Mammary epithelial cell (primary cell): ENCODE measurements at regions of chr10 and their contacts with region 1.

Region 1: GRCh38 chr10:113390896-113391295 is 162.0 kb upstream of the HABP2 start:
- DNase-seq: no peak
- H3K4me3 ChIP-seq: no peak overlapping the region
- H3K27ac ChIP-seq: no peak overlapping the region
- H3K4me1 ChIP-seq: no peaks in the 10 kb centered on the region
- H3K27me3 ChIP-seq: peaks cover 5% of the 10 kb centered on the region
- CTCF ChIP-seq: no peak

Region 2: GRCh38 chr10:113431398-113432160 is 40.7 kb after region 1 on chr10:
- CTCF ChIA-PET with region 1: no interaction called
- dilution Hi-C with region 1: loop called (anchors 5 kb)
- in situ Hi-C with region 1: no loop called
- intact Hi-C with region 1: no loop called
- DNase-seq: no peak
- H3K4me3 ChIP-seq: no peak overlapping the region
- H3K27ac ChIP-seq: no peak overlapping the region
- H3K4me1 ChIP-seq: no peaks in the 10 kb centered on the region
- H3K27me3 ChIP-seq: no peaks in the 10 kb centered on the region
- CTCF ChIP-seq: no peak

Region 3: DNA sequence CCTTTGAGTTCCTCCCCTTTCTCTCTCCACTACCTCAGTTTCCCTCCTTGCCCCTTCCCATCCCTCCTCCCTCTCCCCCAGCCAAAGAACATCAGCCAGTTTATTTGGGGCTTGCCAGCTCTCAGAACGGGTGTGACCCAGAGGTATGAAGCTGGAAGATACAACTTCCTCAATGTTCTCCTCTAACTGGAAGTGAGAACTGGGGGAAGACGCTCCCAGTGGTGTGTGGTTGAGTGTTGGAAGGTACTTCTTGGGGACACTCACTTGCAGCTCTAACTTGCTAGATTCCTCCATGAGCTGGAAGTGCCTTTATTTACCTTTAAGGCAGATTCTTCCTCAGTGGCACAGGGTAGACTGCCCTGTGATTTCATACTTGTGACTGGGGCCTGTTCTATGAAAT is 51.4 kb after region 1 on chr10:
- CTCF ChIA-PET with region 1: no interaction called
- dilution Hi-C with region 1: no loop called
- in situ Hi-C with region 1: no loop called
- intact Hi-C with region 1: no loop called
- DNase-seq: no peak
- H3K4me3 ChIP-seq: no peak overlapping the region
- H3K27ac ChIP-seq: no peak overlapping the region
- H3K4me1 ChIP-seq: no peaks in the 10 kb centered on the region
- H3K27me3 ChIP-seq: peaks cover 3% of the 10 kb centered on the region
- CTCF ChIP-seq: no peak